A549 (cell line): ENCODE measurements at regions of chr19 and their contacts with region 1.

Region 1: DNA sequence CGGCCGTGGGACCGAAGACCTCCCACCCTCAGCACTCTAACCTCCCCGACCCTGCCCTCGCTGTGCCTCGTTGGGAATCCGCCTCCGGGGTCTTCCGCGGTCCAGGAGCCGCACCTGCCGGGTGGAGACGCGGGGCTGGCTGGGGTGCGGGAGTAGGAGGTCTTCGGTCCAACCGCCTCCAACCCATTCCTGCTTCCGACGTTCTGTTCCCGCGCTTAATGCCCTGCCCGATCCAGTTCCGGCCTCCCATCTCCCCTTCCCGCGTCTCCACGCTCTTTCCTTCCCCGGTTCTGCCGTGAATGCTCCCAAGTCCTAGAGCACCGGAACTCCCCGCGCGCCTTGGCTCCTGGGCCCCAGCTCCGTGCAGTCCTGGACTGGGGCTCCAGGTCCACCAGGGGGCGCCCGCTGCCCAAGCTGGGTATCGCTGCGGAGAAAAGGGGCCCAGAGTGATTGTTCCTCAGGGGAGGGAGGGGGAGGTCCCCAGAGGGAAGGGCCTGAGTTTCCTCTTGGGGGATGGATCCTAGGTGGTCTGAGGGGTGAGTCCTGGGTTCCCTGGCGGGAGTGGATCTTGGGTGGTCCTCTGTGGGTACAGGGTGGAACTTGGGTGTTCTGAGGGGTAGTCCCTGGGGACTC is 14.1 kb upstream of the TNFSF9 start:
- DNase-seq: peak; percentile 83 to 84
- ATAC-seq: peak; percentile 79 to 93
- H3K4me3 ChIP-seq: peak overlapping the region; percentile 58
- H3K27ac ChIP-seq: peak overlapping the region; percentile 51 to 93
- H3K4me1 ChIP-seq: peaks cover 46% of the 10 kb centered on the region
- CTCF ChIP-seq: peak; percentile 90
- EP300 ChIP-seq: no peak
- POLR2A ChIP-seq: no peak
- RAD21 ChIP-seq: peak; percentile 94

Region 2: DNA sequence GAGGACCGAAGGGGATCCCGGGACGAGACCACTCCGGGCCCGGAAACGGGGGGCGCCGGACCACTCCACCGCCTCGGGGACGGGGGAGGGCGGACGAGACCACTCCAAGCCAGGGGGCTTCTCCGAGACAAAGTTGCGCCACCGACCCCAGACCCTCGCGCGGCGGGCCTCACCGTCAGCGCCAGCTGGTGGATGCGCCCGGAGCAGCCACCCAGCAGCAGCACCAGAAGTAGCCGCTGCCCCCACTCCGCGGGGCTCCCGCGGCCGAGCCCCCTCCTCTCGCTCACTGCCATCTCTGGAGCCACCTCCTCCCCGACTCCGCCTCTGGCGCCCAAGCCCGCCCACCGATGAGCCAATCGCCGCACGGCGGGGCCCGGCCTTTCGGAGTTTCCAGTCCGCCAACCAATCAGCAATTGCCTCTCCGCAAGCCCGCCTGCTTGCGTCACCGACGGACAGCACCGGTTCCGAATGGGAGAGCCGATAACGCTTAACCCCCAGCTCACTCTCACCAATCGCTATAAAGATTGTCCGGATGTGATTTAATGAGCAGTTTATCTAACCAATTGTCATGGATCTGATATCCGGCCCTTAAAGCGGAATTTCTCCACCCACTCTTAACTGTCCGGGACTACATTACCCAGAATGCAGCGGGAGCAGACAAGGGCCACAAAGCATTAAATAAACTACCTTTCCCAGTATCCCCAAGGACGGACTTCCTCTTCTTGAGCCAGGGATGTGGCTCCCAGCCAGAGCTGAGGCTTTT is 220.7 kb after region 1 on chr19 and contains the start of gene GPR108:
- CTCF ChIA-PET with region 1: interaction called, 19 read pairs
- POLR2A ChIA-PET with region 1: no interaction called
- DNase-seq: peak; percentile 94 to 99
- ATAC-seq: peak; percentile 62 to 79
- H3K4me3 ChIP-seq: peak within 1 kb of the TSS; percentile 93
- H3K27ac ChIP-seq: peak within 1 kb of the TSS; percentile 97 to 98
- H3K4me1 ChIP-seq: peaks cover 29% of the 10 kb centered on the region
- CTCF ChIP-seq: no peak
- EP300 ChIP-seq: no peak
- POLR2A ChIP-seq: no peak; the same call in 1 of the 2 replicates
- RAD21 ChIP-seq: no peak
- polyA plus RNA-seq, gene GPR108: 50.2 and 69.4 TPM in 2 replicates